K562 (cell line): ENCODE measurements at regions of chr5 and their contacts with region 1.

Region 1: DNA sequence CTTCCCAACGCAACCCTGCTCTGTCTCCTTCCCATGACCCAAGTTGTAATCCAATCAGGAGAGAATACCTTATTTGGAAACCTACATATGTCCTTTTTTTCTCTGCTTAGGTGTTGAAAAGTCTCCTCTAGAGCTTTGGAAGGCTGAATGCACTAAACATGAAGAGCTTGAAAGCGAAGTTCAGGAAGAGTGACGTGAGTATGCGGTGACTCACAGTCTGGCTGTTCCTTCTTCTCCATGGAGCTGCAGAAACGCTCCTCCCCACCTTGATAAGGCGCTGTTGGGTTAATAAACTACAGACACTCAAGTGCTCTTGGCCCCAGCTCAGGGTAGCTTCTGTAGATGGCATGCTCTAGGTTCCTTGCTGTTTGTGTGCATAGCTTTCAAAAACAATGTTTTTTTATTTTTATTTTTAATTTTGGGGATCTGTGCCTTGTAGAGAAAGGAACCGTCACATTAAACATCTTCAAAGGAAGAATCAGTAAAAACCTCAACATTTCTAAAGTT is 30.7 kb downstream of the RAI14 start:
- DNase-seq: peak; percentile 78 to 95 (median 83)
- ATAC-seq: peak; percentile 97
- H3K4me3 ChIP-seq: no peak overlapping the region
- H3K27ac ChIP-seq: peak overlapping the region; percentile 81
- H3K4me1 ChIP-seq: peaks cover 13 to 29% of the 10 kb centered on the region in 2 experiments; a peak in 4 of 5 replicates
- H3K27me3 ChIP-seq: no peaks in the 10 kb centered on the region
- CTCF ChIP-seq: peak; percentile 40 to 55 (median 54); a peak in 4 of 6 replicates
- EP300 ChIP-seq: peak; percentile 64
- POLR2A ChIP-seq: peak; percentile 51; the same call in 1 of the 2 replicates
- RAD21 ChIP-seq: peak; percentile 54 to 66

Region 2: DNA sequence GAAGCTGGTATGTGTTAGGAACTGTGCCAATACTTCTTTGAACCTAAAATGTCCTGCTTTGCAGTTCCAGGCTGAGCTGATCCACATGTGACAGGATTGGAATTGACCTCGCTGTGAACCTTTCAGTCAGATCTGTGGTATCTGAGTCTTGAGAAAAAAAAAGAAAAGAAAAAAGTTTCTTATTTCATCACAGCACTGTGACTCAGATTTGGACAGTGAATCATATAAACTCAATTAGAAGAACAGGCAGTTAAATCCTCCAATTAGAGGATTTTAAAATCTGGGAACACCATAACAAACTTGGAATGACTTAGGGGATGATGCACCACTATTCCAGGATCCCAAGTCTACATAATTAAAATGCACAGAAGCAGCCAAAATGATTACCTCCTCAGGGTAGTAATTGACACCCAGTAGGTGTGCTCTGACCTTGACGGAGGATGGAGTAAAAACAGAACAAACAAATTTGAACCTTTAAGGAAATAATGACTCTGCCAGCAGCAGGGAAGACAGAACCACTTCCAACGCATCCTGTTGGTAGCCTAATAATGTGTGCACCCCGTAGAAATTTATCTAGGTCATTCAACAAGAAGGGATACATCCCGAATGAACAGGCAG is 88.5 kb before region 1 on chr5:
- CTCF ChIA-PET with region 1: no interaction called
- POLR2A ChIA-PET with region 1: no interaction called
- in situ Hi-C with region 1: no loop called
- intact Hi-C with region 1: no loop called
- DNase-seq: no peak
- ATAC-seq: no peak
- H3K4me3 ChIP-seq: no peak overlapping the region
- H3K27ac ChIP-seq: no peak overlapping the region
- H3K4me1 ChIP-seq: peaks cover 0 to 5% of the 10 kb centered on the region in 2 experiments; a peak in 2 of 5 replicates
- H3K27me3 ChIP-seq: peaks cover 0 to 5% of the 10 kb centered on the region in 2 experiments; a peak in 1 of 5 replicates
- CTCF ChIP-seq: no peak
- EP300 ChIP-seq: no peak
- POLR2A ChIP-seq: no peak
- RAD21 ChIP-seq: no peak

Region 3: DNA sequence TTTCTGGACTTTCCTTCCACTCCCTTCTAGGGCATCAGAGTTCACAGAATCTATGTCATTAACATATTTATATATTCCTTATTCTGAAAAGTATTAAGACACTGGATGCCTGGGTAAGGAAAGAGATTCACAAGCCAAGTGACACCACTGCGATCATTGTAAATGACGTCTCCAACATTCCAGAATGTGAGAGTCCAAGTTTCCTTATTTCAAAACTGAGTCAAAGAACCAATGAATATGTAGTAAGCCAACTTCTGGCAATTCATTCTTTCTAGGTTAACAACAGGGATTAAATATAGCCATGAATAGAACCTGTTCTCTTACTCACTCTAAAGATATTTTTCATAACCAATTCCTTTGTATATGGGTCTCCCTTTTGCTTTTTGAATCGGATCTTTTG is 12.6 kb before region 1 on chr5:
- CTCF ChIA-PET with region 1: no interaction called
- POLR2A ChIA-PET with region 1: interaction called, 22 read pairs
- in situ Hi-C with region 1: no loop called
- intact Hi-C with region 1: no loop called
- DNase-seq: no peak
- ATAC-seq: no peak
- H3K4me3 ChIP-seq: no peak overlapping the region
- H3K27ac ChIP-seq: peak overlapping the region; percentile 16; the same call in 2 of the 3 replicates
- H3K4me1 ChIP-seq: peaks cover 10 to 28% of the 10 kb centered on the region in 2 experiments; a peak in 4 of 5 replicates
- H3K27me3 ChIP-seq: no peaks in the 10 kb centered on the region
- CTCF ChIP-seq: no peak
- EP300 ChIP-seq: no peak
- POLR2A ChIP-seq: no peak
- RAD21 ChIP-seq: no peak

Region 4: DNA sequence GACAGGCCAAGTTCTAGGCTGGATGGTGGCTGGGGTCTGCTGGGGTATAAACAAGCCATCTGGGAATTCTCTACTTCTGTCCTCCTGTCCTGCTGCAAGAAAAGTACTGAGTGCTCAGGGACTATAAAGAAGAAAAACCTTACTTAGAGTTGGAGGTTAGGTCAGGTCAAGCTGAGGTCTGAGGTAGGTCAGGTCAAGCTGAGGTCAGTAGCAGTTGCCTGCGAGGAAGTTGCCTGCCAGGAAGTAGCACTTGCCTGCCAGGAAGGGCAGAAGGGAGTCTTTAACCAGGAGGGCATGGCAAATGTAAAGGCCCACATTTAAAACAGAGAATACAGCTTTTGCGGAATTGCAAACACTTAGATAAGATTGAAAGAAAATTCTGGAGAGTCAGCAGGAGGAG is 594.8 kb after region 1 on chr5:
- CTCF ChIA-PET with region 1: no interaction called
- POLR2A ChIA-PET with region 1: no interaction called
- in situ Hi-C with region 1: no loop called
- intact Hi-C with region 1: no loop called
- DNase-seq: no peak
- ATAC-seq: no peak
- H3K4me3 ChIP-seq: no peak overlapping the region
- H3K27ac ChIP-seq: no peak overlapping the region
- H3K4me1 ChIP-seq: no peaks in the 10 kb centered on the region
- H3K27me3 ChIP-seq: no peaks in the 10 kb centered on the region
- CTCF ChIP-seq: no peak
- EP300 ChIP-seq: no peak
- POLR2A ChIP-seq: no peak
- RAD21 ChIP-seq: no peak